ENCODE measurements at regions of chrX and their contacts with region 1.

Region 1: DNA sequence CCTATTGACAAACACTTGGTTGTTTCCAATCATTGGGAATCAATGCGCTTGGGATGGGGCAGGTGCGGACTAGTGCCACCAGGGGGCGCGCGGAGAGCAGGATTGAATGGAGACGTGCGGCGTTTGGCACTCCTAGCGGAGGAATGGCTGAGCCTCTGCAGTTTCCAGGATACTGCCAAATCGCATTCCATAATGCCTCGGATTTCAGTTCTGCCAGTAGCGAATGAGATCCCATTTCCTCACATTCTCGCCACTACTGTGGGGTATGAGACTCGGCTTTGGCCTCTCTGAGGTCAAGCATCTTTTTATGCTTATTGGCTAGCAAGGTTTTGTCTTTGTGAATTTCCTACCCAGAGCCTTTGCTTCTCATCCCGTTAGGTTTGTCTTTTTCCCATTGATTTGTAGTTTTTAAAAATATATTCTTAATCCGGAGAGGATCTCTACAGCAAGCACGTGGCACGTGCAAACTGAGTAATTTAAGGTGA is 28.7 kb downstream of the CLDN34 start:
- DNase-seq: peak; percentile 64
- H3K4me3 Mint-ChIP-seq: peak overlapping the region; percentile 73
- H3K27ac Mint-ChIP-seq: peak overlapping the region; percentile 40
- H3K4me1 Mint-ChIP-seq: peaks cover 21% of the 10 kb centered on the region
- H3K27me3 Mint-ChIP-seq: peaks cover 2% of the 10 kb centered on the region

Region 2: DNA sequence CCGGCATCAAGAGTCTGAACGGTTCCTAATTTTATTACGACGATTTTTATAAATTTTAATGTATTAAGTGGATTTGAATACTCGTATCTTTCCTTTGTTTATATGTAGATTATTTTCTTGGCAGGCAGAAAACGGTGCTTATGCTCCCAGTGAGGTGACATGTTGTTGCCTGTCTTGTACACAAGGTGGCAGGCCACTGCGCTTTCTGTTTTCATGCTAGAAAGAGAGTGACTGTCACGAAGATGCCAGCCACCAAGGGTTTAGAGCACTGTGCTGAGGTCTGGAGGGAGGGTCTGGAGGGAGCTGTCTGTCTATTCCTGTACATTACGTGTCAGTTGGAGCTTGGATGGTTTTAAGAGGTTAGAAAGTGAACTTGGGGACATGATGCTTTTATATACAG is 121.9 kb before region 1 on chrX:
- intact Hi-C with region 1: loop called (anchors 2 kb)
- DNase-seq: peak; percentile 1
- H3K4me3 Mint-ChIP-seq: no peak overlapping the region
- H3K27ac Mint-ChIP-seq: no peak overlapping the region
- H3K4me1 Mint-ChIP-seq: no peaks in the 10 kb centered on the region
- H3K27me3 Mint-ChIP-seq: peaks cover 12% of the 10 kb centered on the region

Region 3: GRCh38 chrX:9885150-9885549 is 110.7 kb before region 1 on chrX:
- intact Hi-C with region 1: loop called (anchors 1 kb)
- DNase-seq: peak; percentile 5
- H3K4me3 Mint-ChIP-seq: no peak overlapping the region
- H3K27ac Mint-ChIP-seq: no peak overlapping the region
- H3K4me1 Mint-ChIP-seq: no peaks in the 10 kb centered on the region
- H3K27me3 Mint-ChIP-seq: peaks cover 7% of the 10 kb centered on the region

Region 4: GRCh38 chrX:9942086-9942485 is 53.8 kb before region 1 on chrX:
- intact Hi-C with region 1: loop called (anchors 2 kb)
- DNase-seq: peak; percentile 56
- H3K4me3 Mint-ChIP-seq: peak overlapping the region; percentile 35
- H3K27ac Mint-ChIP-seq: peak overlapping the region; percentile 89
- H3K4me1 Mint-ChIP-seq: peaks cover 19% of the 10 kb centered on the region
- H3K27me3 Mint-ChIP-seq: peaks cover 26% of the 10 kb centered on the region

Region 5: DNA sequence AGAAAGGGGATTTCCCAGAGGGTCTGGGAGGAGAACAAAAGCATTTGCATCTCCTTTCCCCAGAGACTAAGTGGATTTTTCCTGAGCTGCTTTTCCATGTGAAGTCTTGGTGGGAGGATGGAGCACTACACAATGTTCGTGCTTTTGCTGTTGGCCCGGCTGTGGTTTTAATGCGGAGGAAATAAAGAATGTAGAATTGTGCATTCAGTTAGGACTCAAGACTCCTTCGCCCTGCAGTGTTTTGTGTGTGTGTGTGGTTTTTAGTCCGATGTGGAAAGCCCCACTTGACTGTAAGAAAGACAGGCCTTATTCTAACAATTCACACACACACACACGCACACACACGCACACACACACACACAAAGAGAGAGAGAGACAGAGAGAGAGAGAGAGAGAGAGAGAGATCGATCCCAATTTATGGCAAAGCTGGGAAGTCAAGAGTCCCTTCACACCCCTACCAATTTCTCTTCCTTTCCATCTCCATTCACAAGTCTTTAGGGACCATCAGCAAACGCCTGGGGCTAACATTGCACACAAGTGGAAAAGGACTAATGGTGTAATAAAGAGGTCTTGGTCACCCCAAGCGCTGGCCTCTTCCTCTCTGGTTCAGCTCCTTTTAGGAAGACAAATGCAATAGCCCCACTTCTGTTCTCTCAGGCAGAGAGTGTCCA is 15.5 kb after region 1 on chrX:
- intact Hi-C with region 1: loop called (anchors 1 kb)
- DNase-seq: peak; percentile 19
- H3K4me3 Mint-ChIP-seq: peak overlapping the region; percentile 67
- H3K27ac Mint-ChIP-seq: peak overlapping the region; percentile 95
- H3K4me1 Mint-ChIP-seq: peaks cover 40% of the 10 kb centered on the region
- H3K27me3 Mint-ChIP-seq: peaks cover 3% of the 10 kb centered on the region

Region 6: GRCh38 chrX:10098270-10098713 is 102.4 kb after region 1 on chrX:
- intact Hi-C with region 1: loop called (anchors 1 kb)
- DNase-seq: peak; percentile 53
- H3K4me3 Mint-ChIP-seq: peak overlapping the region; percentile 79
- H3K27ac Mint-ChIP-seq: peak overlapping the region; percentile 87
- H3K4me1 Mint-ChIP-seq: peaks cover 34% of the 10 kb centered on the region
- H3K27me3 Mint-ChIP-seq: no peaks in the 10 kb centered on the region